MCF 10A (cell line): ENCODE measurements at regions of chr7 and their contacts with region 1.

Region 1: DNA sequence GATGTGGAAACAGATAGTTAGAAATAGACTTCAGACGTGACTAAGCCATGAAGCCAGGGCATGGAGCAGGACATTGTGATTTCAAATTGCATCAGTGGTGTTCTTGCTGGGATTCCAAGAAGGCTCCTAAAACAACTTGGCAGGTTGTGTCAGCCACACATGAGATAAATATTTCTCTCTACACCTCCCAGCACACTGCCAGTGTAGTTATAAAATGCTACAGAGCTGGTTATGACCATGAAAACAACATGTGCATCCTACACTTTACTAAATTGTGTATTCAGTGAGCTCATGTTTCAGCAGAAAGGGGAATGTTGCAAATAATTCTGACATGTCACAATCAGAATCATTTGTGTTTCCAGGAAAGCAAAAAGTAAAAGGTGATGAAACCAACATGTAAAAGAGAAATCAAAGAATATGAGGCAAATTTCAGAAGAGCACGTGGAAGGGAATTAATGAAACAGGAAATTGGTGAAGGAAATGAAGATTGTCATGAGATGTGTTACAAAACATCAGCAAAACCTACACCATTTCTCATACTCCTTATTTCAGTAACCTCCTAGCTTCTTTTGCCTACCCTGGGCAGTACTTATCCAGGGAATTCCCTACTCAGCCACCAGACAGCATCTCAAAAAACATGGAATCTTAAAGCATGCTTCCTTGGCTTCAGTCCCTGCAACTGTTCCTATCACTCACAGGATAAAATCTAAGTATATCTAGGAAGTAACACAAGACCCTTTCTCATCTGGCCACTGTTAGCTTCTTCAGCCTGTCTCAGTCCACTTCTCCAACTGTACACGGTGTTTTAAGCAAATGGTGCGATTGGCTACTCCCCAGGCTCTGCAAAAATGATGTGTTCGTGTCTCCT is 5.8 kb upstream of the CYP3A7 start:
- DNase-seq: peak; percentile 78
- H3K4me3 Mint-ChIP-seq: peak overlapping the region; percentile 31
- H3K27ac Mint-ChIP-seq: peak overlapping the region; percentile 87
- H3K4me1 Mint-ChIP-seq: peaks cover 47% of the 10 kb centered on the region
- H3K27me3 Mint-ChIP-seq: no peaks in the 10 kb centered on the region
- CTCF ChIP-seq: no peak

Region 2: GRCh38 chr7:99558306-99559174 is 182.3 kb before region 1 on chr7 and contains the start of gene ZNF655:
- CTCF ChIA-PET with region 1: no interaction called
- POLR2A ChIA-PET with region 1: interaction called, 22 read pairs
- intact Hi-C with region 1: no loop called
- DNase-seq: peak; percentile 85
- H3K4me3 Mint-ChIP-seq: peak within 1 kb of the TSS; percentile 85
- H3K27ac Mint-ChIP-seq: peak within 1 kb of the TSS; percentile 86
- H3K4me1 Mint-ChIP-seq: peaks cover 33% of the 10 kb centered on the region
- H3K27me3 Mint-ChIP-seq: no peaks in the 10 kb centered on the region
- CTCF ChIP-seq: no peak
- total RNA-seq, gene ZNF655: 85.2 and 89.9 TPM in 2 replicates

Region 3: DNA sequence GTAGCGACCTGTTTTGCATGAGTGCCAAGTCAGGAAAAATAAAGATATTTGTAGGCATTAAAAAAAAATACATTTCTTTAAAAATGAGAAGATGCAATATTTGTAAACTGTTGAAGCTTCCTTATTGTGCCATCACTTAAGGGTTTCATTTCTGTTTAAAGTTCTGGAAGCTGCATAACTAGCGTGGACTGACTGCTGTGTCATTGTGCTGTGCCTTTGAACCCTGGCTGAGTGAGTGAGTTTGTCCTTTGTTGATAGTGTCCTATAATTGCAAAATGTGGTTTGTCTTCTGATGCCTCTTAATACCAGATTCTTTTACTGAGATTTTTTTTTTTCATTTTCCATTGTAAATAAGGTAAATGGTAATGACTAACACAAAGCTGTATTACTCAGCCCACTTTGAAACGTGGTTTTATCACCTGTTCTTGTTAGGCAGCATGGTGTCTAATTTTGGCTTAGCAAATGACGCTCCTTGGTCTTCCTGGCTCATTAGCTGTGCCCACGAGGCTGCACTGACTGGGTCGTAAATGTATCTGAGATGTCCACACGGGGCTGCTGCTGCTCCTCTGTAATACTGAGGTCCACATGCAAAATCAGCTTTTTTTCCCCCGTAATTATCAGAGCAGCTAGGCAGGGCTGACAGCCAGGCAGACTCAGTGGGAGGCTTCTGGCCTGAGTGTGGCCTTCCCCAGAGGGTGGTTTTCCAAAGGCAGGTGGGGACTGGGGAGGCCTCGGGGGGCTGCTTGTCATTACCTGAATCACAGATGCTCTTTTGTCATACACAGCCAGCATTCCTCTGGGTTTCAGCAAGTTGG is 109.3 kb before region 1 on chr7:
- CTCF ChIA-PET with region 1: interaction called, 20 read pairs
- POLR2A ChIA-PET with region 1: interaction called, 115 read pairs
- intact Hi-C with region 1: loop called (anchors 2 kb)
- DNase-seq: peak; percentile 61
- H3K4me3 Mint-ChIP-seq: no peak overlapping the region
- H3K27ac Mint-ChIP-seq: peak overlapping the region; percentile 84
- H3K4me1 Mint-ChIP-seq: peaks cover 21% of the 10 kb centered on the region
- H3K27me3 Mint-ChIP-seq: no peaks in the 10 kb centered on the region
- CTCF ChIP-seq: peak; percentile 64

Region 4: DNA sequence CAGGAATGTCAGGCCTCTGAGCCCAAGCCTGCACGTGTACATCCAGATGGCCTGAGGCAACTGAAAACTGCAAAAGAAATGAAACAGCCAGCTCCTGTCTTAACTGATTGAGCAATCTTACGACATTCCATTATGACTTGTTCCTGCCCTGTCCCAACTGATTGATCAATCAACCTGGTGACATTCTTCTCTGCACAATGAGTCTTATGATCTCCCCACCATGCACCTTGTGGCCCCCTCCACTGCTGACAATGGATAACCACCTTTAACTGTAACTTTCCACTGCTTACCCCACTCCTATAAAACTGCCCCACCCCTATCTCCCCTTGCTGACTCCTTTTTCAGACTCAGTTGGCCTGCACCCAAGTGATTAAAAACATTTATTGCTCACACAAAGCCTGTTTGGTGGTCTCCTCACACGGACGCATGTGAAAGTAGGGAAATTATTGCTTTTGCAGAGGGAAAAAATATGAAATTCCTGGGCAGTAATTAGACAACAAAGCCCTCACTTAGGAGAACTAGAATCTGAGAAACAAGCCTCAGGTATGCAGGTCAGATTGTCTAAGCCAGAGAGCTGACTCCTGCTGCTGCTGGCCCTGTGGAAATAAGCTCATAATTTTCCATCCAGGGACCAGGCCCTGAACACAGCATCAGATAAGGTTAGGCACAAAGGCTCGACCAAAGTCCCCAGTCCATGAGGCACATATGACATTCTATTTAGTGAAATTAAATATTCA is 11.1 kb before region 1 on chr7:
- CTCF ChIA-PET with region 1: interaction called, 5 read pairs
- POLR2A ChIA-PET with region 1: interaction called, 105 read pairs
- intact Hi-C with region 1: no loop called
- DNase-seq: peak; percentile 85
- H3K4me3 Mint-ChIP-seq: no peak overlapping the region
- H3K27ac Mint-ChIP-seq: no peak overlapping the region
- H3K4me1 Mint-ChIP-seq: no peaks in the 10 kb centered on the region
- H3K27me3 Mint-ChIP-seq: no peaks in the 10 kb centered on the region
- CTCF ChIP-seq: no peak

Region 5: DNA sequence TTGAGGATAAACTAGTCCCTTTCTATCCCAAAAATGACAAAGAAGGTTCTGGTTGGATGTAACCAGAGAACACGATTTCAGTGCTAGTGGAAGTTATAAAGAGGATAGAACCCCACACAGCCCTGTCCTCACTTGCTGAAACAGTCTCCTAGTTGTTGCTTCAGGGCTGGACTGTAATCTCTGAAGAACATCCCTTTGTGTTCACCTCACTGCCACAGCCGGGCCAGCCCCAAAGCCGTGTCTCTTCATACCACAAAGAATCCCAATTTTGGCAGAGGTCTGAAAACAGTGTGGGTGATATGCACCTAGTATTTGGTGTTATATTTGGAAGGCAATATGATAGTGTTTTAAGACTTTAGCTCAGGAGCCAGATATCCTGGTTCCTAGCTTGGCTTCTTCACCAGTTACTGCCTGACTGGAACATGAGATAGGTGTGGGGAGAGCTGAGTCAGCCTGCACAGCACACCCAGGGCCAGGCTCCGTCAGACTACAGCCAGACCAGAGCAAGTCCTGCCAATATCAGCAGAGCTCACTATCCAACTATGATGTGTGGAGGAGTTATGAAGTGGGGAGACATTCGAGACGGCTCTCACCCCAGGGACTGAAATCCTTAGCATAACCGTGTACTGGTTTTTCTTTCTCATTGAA is 22.0 kb after region 1 on chr7:
- CTCF ChIA-PET with region 1: interaction called, 3 read pairs
- POLR2A ChIA-PET with region 1: interaction called, 15 read pairs
- intact Hi-C with region 1: no loop called
- DNase-seq: peak; percentile 57
- H3K4me3 Mint-ChIP-seq: peak overlapping the region; percentile 19
- H3K27ac Mint-ChIP-seq: peak overlapping the region; percentile 56
- H3K4me1 Mint-ChIP-seq: peaks cover 16% of the 10 kb centered on the region
- H3K27me3 Mint-ChIP-seq: no peaks in the 10 kb centered on the region
- CTCF ChIP-seq: no peak

Region 6: GRCh38 chr7:99829524-99830160 is 88.8 kb after region 1 on chr7:
- CTCF ChIA-PET with region 1: interaction called, 5 read pairs
- POLR2A ChIA-PET with region 1: interaction called, 93 read pairs
- intact Hi-C with region 1: no loop called
- DNase-seq: no peak
- H3K4me3 Mint-ChIP-seq: no peak overlapping the region
- H3K27ac Mint-ChIP-seq: no peak overlapping the region
- H3K4me1 Mint-ChIP-seq: peaks cover 45% of the 10 kb centered on the region
- H3K27me3 Mint-ChIP-seq: no peaks in the 10 kb centered on the region
- CTCF ChIP-seq: no peak

Region 7: DNA sequence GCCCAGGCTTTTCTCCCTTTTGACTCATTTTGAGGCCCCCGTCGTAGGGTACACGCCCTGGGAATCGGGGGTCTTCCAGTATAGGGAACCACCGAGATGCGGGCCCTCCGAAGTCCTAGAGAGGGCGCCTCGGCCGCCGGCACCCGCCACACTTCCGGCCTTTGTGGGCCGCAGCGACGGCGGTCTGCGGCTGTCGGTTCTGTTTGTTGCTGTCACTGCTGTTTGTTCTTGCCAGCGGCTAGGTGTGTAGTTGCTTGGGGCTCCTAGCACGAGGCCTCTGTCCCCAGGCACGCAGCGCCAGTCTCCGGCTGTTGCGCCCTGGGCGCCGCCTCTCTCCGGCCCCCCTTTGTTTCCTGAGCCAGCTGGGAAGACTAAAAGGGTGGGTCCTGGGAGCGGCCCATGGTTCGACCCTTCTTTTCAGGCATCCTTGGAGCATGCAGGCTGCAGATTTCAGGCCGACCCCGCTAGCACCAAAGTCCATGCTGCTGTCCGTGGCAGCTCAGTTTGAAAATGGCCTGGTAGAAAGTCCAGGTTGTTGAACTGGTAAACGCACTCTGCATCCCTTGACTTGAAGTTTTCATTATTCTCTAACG is 256.8 kb after region 1 on chr7:
- CTCF ChIA-PET with region 1: no interaction called
- POLR2A ChIA-PET with region 1: no interaction called
- intact Hi-C with region 1: no loop called
- DNase-seq: no peak
- H3K4me3 Mint-ChIP-seq: no peak overlapping the region
- H3K27ac Mint-ChIP-seq: no peak overlapping the region
- H3K4me1 Mint-ChIP-seq: no peaks in the 10 kb centered on the region
- H3K27me3 Mint-ChIP-seq: peaks cover 12% of the 10 kb centered on the region
- CTCF ChIP-seq: no peak